MCF 10A (cell line): ENCODE measurements at regions of chr9 and their contacts with region 1.

Region 1: GRCh38 chr9:81689343-81690190 is at the start of gene TLE1:
- DNase-seq: peak; percentile 100
- H3K4me3 Mint-ChIP-seq: no peak within 1 kb of the TSS
- H3K27ac Mint-ChIP-seq: peak within 1 kb of the TSS; percentile 82
- H3K4me1 Mint-ChIP-seq: peaks cover 8% of the 10 kb centered on the region
- H3K27me3 Mint-ChIP-seq: no peaks in the 10 kb centered on the region
- CTCF ChIP-seq: no peak
- total RNA-seq, gene TLE1: 21.9 and 26.8 TPM in 2 replicates

Region 2: DNA sequence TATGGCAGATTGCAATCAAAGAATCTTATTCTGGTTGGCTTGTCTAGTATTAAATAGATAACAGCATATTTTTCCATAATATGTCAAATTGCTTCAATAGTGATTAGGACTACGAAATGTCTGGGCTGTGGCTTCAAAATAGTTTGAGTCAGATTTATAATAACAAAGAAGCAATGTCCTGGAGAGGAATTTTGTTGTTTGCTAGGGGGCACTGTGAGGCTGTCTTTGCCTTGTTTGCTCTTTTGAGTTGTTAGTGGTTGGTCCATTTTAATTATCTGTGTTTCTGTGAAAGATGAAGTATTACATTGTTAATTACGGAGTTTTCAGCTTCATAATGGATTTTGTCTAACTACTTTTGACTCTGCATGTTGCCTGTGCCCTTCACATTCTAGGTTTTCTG is 1404.2 kb before region 1 on chr9:
- CTCF ChIA-PET with region 1: no interaction called
- POLR2A ChIA-PET with region 1: no interaction called
- intact Hi-C with region 1: loop called (anchors 10 kb)
- DNase-seq: peak; percentile 54
- H3K4me3 Mint-ChIP-seq: no peak overlapping the region
- H3K27ac Mint-ChIP-seq: no peak overlapping the region
- H3K4me1 Mint-ChIP-seq: no peaks in the 10 kb centered on the region
- H3K27me3 Mint-ChIP-seq: no peaks in the 10 kb centered on the region
- CTCF ChIP-seq: no peak

Region 3: GRCh38 chr9:80885894-80886293 is 803.7 kb before region 1 on chr9:
- CTCF ChIA-PET with region 1: no interaction called
- POLR2A ChIA-PET with region 1: no interaction called
- intact Hi-C with region 1: loop called (anchors 10 kb)
- DNase-seq: peak; percentile 40
- H3K4me3 Mint-ChIP-seq: no peak overlapping the region
- H3K27ac Mint-ChIP-seq: no peak overlapping the region
- H3K4me1 Mint-ChIP-seq: no peaks in the 10 kb centered on the region
- H3K27me3 Mint-ChIP-seq: no peaks in the 10 kb centered on the region
- CTCF ChIP-seq: no peak

Region 4: DNA sequence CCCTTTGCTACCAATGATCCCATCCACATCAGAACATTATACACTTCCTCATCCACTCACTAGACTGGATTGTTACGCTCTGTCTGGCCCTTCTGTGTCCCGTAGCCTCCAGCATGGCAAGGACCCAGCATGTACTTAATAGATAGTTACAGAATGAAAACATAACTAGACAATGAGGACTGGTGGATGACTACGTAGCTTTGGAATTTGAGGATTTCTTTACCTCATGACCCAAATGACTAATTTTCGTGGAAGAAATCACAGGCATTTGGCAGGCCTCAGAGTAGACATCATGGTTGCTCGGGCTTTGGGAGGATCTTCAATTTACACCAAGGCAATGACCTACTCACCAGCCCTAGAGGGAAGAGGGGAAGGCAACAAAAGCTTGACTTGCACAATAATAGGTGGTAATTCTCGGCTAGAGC is 300.0 kb before region 1 on chr9:
- CTCF ChIA-PET with region 1: no interaction called
- POLR2A ChIA-PET with region 1: no interaction called
- intact Hi-C with region 1: loop called (anchors 2 kb)
- DNase-seq: peak; percentile 95
- H3K4me3 Mint-ChIP-seq: no peak overlapping the region
- H3K27ac Mint-ChIP-seq: no peak overlapping the region
- H3K4me1 Mint-ChIP-seq: peaks cover 27% of the 10 kb centered on the region
- H3K27me3 Mint-ChIP-seq: no peaks in the 10 kb centered on the region
- CTCF ChIP-seq: no peak

Region 5: GRCh38 chr9:81676395-81676794 is 13.2 kb before region 1 on chr9:
- CTCF ChIA-PET with region 1: interaction called, 11 read pairs
- POLR2A ChIA-PET with region 1: interaction called, 6 read pairs
- intact Hi-C with region 1: no loop called
- DNase-seq: no peak
- H3K4me3 Mint-ChIP-seq: no peak overlapping the region
- H3K27ac Mint-ChIP-seq: no peak overlapping the region
- H3K4me1 Mint-ChIP-seq: no peaks in the 10 kb centered on the region
- H3K27me3 Mint-ChIP-seq: no peaks in the 10 kb centered on the region
- CTCF ChIP-seq: no peak

Region 6: DNA sequence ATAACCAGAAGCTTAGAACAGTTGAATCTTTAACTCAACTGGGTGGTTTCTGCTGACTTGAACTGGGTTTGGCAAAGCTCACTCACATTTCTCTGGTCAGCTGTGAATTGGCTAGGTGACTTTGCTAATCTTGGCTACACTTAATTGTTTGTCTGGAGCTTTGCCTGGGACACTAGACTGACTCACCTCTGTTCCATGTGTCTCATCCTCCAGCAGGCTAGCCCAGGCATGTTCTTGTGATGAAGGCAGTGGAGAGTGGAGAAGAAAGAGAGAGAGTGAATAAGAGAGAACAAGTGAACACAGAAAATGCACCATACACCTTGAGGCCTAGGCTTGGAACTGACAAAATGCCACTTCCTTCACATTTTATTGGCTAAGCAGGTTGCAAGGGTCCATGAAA is 331.6 kb after region 1 on chr9:
- CTCF ChIA-PET with region 1: no interaction called
- POLR2A ChIA-PET with region 1: no interaction called
- intact Hi-C with region 1: loop called (anchors 10 kb)
- DNase-seq: peak; percentile 98
- H3K4me3 Mint-ChIP-seq: no peak overlapping the region
- H3K27ac Mint-ChIP-seq: peak overlapping the region; percentile 96
- H3K4me1 Mint-ChIP-seq: peaks cover 13% of the 10 kb centered on the region
- H3K27me3 Mint-ChIP-seq: no peaks in the 10 kb centered on the region
- CTCF ChIP-seq: no peak